Activated CD4-positive, alpha-beta memory T cell treated with anti-CD3 and anti-CD28 coated beads for 36 hours (primary cell): ENCODE measurements at regions of chr22 and their contacts with region 1.

Region 1: DNA sequence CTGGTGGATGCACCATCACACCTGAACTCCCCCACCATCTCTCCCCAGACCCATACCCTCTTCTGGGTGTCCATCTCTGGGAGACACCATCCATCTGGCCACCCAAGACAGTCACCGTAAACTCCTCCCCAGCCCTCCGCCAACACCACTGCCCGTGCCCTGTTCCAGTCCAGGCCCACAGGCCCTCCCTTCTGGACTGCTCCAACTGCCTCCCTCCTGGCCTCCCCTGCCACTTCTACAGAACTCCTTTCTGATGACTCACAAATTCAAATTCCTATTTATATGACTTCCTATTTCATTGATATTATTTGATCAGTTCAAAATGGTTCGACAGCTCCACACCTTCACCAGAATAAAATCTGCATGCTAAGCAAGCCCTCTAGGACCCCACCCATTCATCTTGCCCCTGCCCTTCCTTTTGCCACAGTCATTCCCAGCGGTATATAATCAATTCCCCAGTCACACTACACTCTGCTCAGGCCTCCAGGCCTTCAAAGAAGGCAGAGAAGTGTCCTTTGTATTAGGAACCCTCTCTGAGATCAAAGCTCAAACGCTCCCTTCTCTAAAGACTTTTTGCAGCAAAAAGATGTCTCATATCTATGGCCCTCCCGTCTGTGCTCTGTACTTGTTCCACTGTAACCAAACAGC is 29.1 kb downstream of the MYH9 start:
- DNase-seq: no peak
- H3K4me3 Mint-ChIP-seq: peak overlapping the region; percentile 47
- H3K27ac Mint-ChIP-seq: peak overlapping the region; percentile 88
- H3K4me1 Mint-ChIP-seq: peaks cover 97% of the 10 kb centered on the region
- H3K27me3 Mint-ChIP-seq: no peaks in the 10 kb centered on the region

Region 2: DNA sequence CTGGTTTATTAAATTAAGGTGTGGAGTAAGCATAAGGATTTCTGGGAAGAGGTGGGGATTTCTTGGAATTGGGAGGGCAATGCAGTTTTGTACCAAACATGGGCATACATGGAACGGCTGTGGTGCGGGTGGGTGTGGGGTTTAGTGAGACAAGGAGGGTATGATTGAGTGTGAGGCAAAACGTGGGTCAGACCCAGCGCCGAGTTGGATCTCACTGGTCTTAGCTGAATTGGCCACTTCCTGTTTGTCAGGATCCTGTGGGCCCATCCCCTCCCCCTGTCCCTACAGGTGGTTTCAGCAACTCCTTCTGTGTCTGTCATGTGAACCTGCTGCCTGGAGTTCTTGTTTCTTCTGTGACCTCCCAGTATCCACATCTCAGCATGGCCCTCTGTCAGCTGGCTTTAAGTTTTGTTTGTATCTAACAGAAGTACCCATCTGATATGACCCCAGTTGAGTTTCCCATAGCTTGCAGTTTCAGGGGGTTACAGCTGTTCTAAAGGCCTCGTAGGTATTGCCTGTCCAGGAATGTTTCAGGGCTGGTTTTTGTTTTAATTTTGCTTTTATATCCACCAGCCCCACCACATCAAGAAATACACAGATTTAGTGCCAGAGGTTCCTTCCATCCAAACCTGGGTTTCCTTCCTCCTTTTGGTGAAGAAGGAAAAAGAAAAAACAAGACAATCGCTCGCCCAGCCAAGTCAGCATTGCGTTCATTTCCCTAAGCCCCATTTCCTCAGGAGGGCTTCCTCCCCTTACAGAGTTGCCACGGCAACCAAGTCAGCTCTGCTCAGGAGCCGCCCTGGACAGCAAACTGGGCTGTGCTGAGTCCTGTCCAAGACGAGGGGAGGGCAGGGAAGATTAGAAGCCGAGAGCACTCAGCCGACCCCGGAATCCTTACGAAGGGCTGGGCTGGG is 99.7 kb before region 1 on chr22:
- CTCF ChIA-PET with region 1: no interaction called
- POLR2A ChIA-PET with region 1: no interaction called
- intact Hi-C with region 1: no loop called
- DNase-seq: peak; percentile 76
- H3K4me3 Mint-ChIP-seq: peak overlapping the region; percentile 17
- H3K27ac Mint-ChIP-seq: peak overlapping the region; percentile 79
- H3K4me1 Mint-ChIP-seq: peaks cover 54% of the 10 kb centered on the region
- H3K27me3 Mint-ChIP-seq: no peaks in the 10 kb centered on the region

Region 3: DNA sequence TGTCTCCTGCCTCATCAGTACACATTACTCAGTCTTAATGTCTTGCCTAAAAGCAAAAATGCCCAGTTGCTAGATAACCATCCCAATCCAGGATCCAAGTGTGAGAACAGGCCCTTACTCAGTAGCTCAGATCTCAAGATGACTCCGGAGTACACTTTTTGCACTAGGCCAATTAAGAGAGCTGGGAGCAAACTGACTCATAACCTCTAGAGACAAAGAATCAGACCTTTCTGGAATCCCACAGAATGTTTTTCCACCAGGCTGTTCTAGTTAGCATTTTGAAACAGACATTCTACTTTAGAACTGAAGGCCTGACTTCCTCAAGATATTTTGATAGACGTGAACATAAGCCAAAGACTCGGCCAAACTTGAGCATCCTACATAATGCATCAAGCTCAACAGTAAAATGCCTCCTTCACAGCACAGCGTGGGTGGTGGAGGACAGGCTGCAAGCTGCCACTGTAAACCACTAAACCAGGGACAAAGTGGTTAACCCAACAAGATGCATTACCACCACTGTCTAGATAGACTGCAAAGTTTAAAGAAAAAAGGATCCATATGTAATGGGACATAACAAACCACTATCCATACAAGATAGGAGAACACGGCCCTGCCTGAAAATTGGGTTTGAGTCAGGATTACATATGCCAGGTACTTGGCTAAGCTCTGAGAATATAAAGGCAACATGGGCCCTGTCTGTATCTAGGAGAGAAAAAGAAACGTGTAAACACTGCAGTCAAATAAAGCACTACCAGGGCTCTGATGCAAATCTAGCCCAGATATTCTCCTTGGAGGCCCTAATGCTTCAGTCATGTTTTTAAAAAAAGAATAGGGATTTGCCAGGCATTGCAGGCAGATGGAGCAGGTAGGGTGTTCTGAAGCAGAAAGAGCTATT is 19.2 kb before region 1 on chr22:
- CTCF ChIA-PET with region 1: interaction called, 6 read pairs
- POLR2A ChIA-PET with region 1: interaction called, 10 read pairs
- intact Hi-C with region 1: loop called (anchors 1 kb)
- DNase-seq: peak; percentile 67
- H3K4me3 Mint-ChIP-seq: peak overlapping the region; percentile 9
- H3K27ac Mint-ChIP-seq: peak overlapping the region; percentile 89
- H3K4me1 Mint-ChIP-seq: peaks cover 97% of the 10 kb centered on the region
- H3K27me3 Mint-ChIP-seq: no peaks in the 10 kb centered on the region

Region 4: GRCh38 chr22:36379593-36380361 is 21.1 kb after region 1 on chr22:
- CTCF ChIA-PET with region 1: interaction called, 21 read pairs
- POLR2A ChIA-PET with region 1: interaction called, 8 read pairs
- intact Hi-C with region 1: loop called (anchors 1 kb)
- DNase-seq: peak; percentile 59
- H3K4me3 Mint-ChIP-seq: peak overlapping the region; percentile 67
- H3K27ac Mint-ChIP-seq: peak overlapping the region; percentile 98
- H3K4me1 Mint-ChIP-seq: peaks cover 93% of the 10 kb centered on the region
- H3K27me3 Mint-ChIP-seq: no peaks in the 10 kb centered on the region

Region 5: GRCh38 chr22:36659762-36660509 is 301.3 kb after region 1 on chr22:
- CTCF ChIA-PET with region 1: no interaction called
- POLR2A ChIA-PET with region 1: no interaction called
- intact Hi-C with region 1: no loop called
- DNase-seq: peak; percentile 62
- H3K4me3 Mint-ChIP-seq: no peak overlapping the region
- H3K27ac Mint-ChIP-seq: no peak overlapping the region
- H3K4me1 Mint-ChIP-seq: no peaks in the 10 kb centered on the region
- H3K27me3 Mint-ChIP-seq: peaks cover 34% of the 10 kb centered on the region